ENCODE measurements at regions of chr17 and their contacts with region 1.

Region 1: DNA sequence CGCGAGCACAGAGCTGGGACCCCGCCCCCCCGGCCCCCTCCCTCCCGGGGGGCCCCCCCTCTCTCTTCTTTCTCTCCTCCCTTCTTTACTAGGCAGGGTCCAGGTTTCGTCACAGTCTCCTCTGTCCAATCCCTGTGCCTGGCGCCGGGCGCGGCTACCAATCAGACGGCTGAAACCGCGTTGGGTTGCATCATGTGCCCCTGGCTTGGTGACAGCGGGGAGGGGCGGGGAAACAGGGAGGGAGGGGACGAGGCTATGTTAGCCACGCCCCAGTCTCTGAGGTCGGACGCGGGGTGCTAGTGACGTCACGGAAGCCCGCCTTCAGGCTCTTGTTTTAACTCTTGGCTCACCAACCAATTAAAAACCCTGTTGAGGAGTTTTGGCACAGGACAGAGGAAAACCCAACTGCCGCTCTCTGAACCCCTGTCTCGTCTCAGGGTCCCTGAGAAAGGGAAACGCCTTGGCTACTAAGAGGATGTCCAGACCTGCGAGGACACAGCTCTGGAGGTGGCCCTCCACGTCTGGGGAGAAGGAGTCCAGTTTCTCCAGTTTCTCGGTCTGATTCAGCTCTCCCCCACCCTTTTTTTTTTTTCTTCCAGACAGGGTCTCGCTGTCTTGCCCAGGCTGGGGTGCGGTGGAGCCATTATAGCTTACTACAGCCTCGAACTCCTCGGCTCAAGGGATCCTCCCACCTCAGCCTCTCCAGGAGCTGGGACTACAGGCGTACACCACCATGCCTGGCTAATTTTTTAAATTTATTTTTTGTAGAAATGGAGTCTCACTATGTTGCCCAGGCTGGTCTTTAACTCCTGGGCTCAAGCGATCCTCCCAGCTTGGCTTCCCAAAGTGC is 439 bp upstream of the PLEKHH3 start:
- DNase-seq: peak; percentile 99
- H3K27ac ChIP-seq: peak overlapping the region; percentile 99
- CTCF ChIP-seq: no peak

Region 2: GRCh38 chr17:42577532-42578281 is 99.5 kb before region 1 on chr17 and contains the start of gene PSMC3IP:
- CTCF ChIA-PET with region 1: interaction called, 37 read pairs
- POLR2A ChIA-PET with region 1: no interaction called
- DNase-seq: peak; percentile 98
- H3K27ac ChIP-seq: peak within 1 kb of the TSS; percentile 92
- CTCF ChIP-seq: no peak

Region 3: DNA sequence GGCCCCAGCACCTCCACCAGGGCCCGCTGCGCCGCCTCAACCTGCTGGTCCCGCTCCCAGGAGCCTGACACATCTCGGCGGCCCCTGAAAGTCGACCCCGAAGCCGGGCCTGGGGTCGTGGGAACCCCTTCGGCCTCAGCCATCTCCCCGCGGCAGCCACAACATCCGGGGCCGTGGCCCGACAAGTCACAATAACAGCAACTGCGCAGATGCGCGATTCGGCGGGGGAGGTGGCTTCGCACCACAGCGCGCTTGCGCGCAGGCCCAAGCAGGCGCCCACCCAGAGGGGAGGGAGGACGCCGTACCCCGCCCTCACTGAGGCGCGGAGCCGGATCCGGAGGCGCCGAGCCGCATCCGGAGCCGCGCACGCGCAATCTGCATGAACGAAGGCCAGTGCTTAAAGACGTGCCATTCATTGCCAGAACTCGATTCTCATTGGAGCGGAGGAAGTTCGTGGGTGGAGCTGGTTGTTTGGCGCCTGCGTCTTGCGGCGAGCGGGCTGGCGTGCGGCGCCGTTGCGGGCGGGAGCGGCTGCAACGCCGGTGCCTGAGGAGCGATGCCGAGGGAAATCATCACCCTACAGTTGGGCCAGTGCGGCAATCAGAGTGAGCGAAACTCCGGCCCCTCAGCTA is 67.9 kb before region 1 on chr17 and contains the starts of genes RETREG3 and TUBG1:
- CTCF ChIA-PET with region 1: interaction called, 11 read pairs
- POLR2A ChIA-PET with region 1: interaction called, 3 read pairs
- DNase-seq: peak; percentile 99
- H3K27ac ChIP-seq: peak within 1 kb of the TSS; percentile 93
- CTCF ChIP-seq: no peak; the same call in 1 of the 2 replicates

Region 4: DNA sequence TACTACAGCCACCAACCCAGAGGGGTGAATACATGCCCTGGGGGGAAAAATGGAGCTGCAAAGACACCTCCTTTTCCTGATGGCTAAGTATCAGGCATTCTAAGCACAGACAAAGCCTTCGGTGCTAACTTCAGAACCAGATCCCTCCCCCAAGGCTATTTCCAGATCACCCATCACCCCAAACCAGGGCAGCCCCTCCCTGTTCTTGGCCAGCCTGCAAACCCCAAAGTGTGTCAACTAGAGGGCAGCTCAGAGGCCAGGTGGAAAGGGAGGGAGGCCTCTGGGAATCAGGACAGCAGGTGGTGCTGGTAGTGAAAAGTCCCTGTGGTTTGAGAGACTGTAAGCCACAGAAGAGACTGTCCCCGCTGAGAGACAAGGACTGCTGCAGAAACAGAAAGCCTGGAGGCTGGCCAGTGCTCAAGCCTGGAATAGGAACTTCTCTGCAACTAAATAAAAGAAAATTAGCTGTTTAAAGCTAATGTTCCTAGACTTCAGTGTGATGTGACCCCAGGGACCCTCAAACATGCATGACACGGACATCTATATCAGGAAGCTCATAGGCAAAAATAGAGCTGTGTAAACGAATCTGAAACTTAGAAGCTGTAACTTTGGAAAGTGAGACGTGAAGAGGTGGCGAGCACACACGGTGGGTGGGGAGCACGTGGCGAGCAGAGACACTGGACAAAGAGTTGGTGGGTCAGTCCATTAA is 58.6 kb before region 1 on chr17:
- CTCF ChIA-PET with region 1: interaction called, 18 read pairs
- POLR2A ChIA-PET with region 1: no interaction called
- DNase-seq: peak; percentile 70
- H3K27ac ChIP-seq: peak overlapping the region; percentile 84
- CTCF ChIP-seq: peak; percentile 58

Region 5: DNA sequence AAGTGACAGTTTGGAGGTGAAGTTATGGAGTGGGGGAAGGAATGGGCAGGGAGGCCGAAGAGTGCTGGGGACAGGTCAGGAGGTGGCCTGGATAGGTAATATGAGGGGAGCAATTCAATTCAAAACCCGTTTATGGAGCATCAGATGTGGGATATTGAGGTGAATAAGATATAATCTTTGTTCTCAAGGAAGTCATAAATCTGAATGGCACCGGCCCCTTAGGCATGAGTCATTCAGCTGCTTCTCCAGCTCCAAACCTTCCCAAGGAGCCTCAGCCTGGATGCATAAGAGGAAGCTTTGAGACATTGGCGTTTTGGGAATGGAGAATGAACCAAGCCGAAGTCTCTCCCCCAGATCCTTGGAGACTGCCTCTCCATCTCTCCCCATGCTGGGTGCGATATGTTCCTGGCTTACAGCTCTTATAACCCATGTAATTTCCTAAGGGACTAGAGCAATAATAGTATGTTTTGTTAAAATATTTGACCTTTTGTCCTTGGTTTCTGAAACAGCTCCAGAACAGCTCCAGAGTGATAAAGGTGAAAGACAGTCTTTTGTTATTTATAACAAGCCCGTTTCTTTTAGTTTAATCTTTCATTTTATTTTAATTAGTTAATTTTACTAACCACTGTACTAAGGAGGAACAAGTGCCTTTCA is 16.4 kb before region 1 on chr17:
- CTCF ChIA-PET with region 1: interaction called, 13 read pairs
- POLR2A ChIA-PET with region 1: interaction called, 6 read pairs
- DNase-seq: peak; percentile 83
- H3K27ac ChIP-seq: peak overlapping the region; percentile 91
- CTCF ChIP-seq: no peak

Measured in RWPE1 (cell line).